ENCODE measurements at regions of chr2 and their contacts with region 1.

Region 1: DNA sequence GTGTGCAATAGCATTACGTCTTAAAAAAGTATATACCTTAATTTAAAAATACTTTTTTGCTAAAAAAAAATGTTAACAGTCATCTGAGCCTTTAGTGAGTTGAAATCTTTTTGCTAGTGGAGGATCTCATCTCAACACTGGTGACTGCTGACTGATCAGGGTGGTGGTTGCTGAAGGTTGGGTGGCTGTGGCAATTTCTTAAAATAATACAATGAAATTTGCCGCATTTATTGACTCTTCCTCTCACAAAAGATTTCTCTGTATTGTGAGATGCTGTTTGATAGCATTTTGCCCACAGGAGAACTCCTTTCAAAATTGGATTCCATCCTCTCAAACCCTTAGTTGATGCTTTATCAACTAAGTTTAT is 46.1 kb upstream of the ANXA4 start:
- DNase-seq: no peak
- CTCF ChIP-seq: no peak

Region 2: GRCh38 chr2:69685321-69686048 is 10.3 kb before region 1 on chr2:
- CTCF ChIA-PET with region 1: interaction called, 11 read pairs
- POLR2A ChIA-PET with region 1: no interaction called
- DNase-seq: no peak
- CTCF ChIP-seq: no peak

Measured in GM10248 (cell line).